CD8-positive, alpha-beta T cell (primary cell): ENCODE measurements at regions of chr14 and their contacts with region 1.

Region 1: GRCh38 chr14:30621940-30622830 is at the start of gene SCFD1:
- DNase-seq: peak; percentile 79 to 96 (median 92)
- ATAC-seq: peak; percentile 98
- H3K4me3 ChIP-seq: peak within 1 kb of the TSS; percentile 80 to 87
- H3K4me3 Mint-ChIP-seq: peak within 1 kb of the TSS; percentile 94
- H3K27ac ChIP-seq: peak within 1 kb of the TSS; percentile 85 to 88
- H3K27ac Mint-ChIP-seq: peak within 1 kb of the TSS; percentile 96
- H3K4me1 ChIP-seq: peaks cover 30% of the 10 kb centered on the region
- H3K4me1 Mint-ChIP-seq: peaks cover 51% of the 10 kb centered on the region
- H3K27me3 ChIP-seq: no peaks in the 10 kb centered on the region
- H3K27me3 Mint-ChIP-seq: no peaks in the 10 kb centered on the region
- CTCF ChIP-seq: no peak
- total RNA-seq, gene SCFD1: 66.5 to 71.5 TPM

Region 2: DNA sequence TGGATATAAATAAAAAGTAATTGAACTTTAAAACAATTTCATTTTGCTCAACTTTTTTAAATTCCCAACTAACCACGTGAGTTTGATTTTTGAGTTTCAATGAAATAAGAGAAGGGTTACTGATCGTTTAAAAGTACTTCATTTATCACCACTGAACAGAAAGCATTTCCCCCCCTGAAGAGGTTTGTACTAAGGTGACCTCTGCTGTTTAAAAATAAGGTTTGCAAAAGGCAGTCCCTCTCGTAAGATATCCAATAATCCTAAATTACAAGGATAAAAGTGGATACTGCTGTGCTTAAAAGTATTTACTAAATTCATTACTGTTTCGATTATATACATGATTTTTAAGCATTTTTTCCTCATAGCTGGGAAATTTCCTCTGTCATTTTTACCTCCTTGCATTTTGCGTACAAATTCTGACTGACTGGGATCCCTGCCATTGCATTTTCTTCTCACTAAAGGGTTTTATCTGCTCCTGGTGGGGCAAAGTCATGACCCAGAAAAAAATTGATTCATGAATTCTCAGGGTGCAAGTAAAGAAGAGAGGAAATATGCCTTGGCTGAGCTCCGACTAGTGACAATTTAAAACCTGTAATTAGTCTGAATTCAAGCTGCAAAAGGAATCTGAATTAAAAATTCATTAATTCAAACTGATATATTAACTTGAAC is 1158.3 kb before region 1 on chr14:
- CTCF ChIA-PET with region 1: no interaction called
- POLR2A ChIA-PET with region 1: no interaction called
- intact Hi-C with region 1: no loop called
- DNase-seq: no peak
- ATAC-seq: no peak
- H3K4me3 ChIP-seq: no peak overlapping the region
- H3K4me3 Mint-ChIP-seq: no peak overlapping the region
- H3K27ac ChIP-seq: no peak overlapping the region
- H3K27ac Mint-ChIP-seq: no peak overlapping the region
- H3K4me1 ChIP-seq: no peaks in the 10 kb centered on the region
- H3K4me1 Mint-ChIP-seq: no peaks in the 10 kb centered on the region
- H3K27me3 ChIP-seq: no peaks in the 10 kb centered on the region
- H3K27me3 Mint-ChIP-seq: no peaks in the 10 kb centered on the region
- CTCF ChIP-seq: no peak

Region 3: GRCh38 chr14:30558675-30559555 is 63.3 kb before region 1 on chr14 and contains the start of gene G2E3:
- CTCF ChIA-PET with region 1: no interaction called
- POLR2A ChIA-PET with region 1: interaction called, 5 read pairs
- intact Hi-C with region 1: loop called (anchors 1 kb)
- DNase-seq: peak; percentile 73 to 92 (median 84)
- ATAC-seq: peak; percentile 99
- H3K4me3 ChIP-seq: peak within 1 kb of the TSS; percentile 91 to 96
- H3K4me3 Mint-ChIP-seq: peak within 1 kb of the TSS; percentile 99
- H3K27ac ChIP-seq: peak within 1 kb of the TSS; percentile 83 to 86
- H3K27ac Mint-ChIP-seq: peak within 1 kb of the TSS; percentile 98
- H3K4me1 ChIP-seq: peaks cover 24% of the 10 kb centered on the region
- H3K4me1 Mint-ChIP-seq: peaks cover 37% of the 10 kb centered on the region
- H3K27me3 ChIP-seq: no peaks in the 10 kb centered on the region
- H3K27me3 Mint-ChIP-seq: no peaks in the 10 kb centered on the region
- CTCF ChIP-seq: no peak
- total RNA-seq, gene G2E3: 25.2 to 34.7 TPM

Region 4: DNA sequence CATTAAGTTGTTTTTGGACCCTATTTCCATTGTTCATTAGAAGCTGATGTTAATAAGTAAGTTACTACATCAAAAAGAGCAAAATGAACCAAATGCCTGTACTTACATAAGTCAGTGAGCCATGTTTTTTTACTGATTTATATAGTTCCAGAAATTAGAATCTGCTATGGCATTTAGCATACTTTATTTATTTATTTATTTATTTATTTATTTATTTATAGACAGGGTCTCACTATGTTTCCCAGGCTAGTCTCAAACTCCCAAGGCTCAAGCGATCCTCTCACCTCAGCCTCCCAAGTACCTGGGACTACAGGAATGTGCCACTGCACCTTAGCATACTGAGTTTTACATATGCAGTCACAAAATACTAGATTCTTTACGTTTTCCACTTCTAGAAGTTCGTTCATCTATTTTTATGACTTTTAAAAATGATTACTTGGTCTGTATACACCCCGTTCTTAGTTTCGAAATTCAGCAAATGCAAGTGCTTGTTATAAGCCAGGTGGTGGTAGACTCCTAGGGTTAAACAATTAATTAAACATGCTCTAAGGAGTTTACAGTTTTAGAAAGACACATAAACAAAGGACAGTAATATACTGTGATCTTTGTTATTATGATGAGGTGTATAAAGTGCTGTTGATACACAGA is 69.7 kb after region 1 on chr14:
- CTCF ChIA-PET with region 1: no interaction called
- POLR2A ChIA-PET with region 1: no interaction called
- intact Hi-C with region 1: loop called in 1 of 2 experiments (anchors 5 kb)
- DNase-seq: no peak
- ATAC-seq: no peak
- H3K4me3 ChIP-seq: no peak overlapping the region
- H3K4me3 Mint-ChIP-seq: no peak overlapping the region
- H3K27ac ChIP-seq: peak overlapping the region in 1 of 2 experiments; percentile 79
- H3K27ac Mint-ChIP-seq: peak overlapping the region; percentile 88
- H3K4me1 ChIP-seq: peaks cover 8% of the 10 kb centered on the region
- H3K4me1 Mint-ChIP-seq: peaks cover 11% of the 10 kb centered on the region
- H3K27me3 ChIP-seq: no peaks in the 10 kb centered on the region
- H3K27me3 Mint-ChIP-seq: no peaks in the 10 kb centered on the region
- CTCF ChIP-seq: no peak

Region 5: GRCh38 chr14:31456841-31457664 is 834.9 kb after region 1 on chr14 and contains the start of gene DTD2:
- CTCF ChIA-PET with region 1: no interaction called
- POLR2A ChIA-PET with region 1: no interaction called
- intact Hi-C with region 1: loop called (anchors 5 kb)
- DNase-seq: peak; percentile 87 to 95 (median 92)
- ATAC-seq: peak; percentile 98
- H3K4me3 ChIP-seq: peak within 1 kb of the TSS; percentile 93 to 95
- H3K4me3 Mint-ChIP-seq: peak within 1 kb of the TSS; percentile 96
- H3K27ac ChIP-seq: peak within 1 kb of the TSS; percentile 78 to 85
- H3K27ac Mint-ChIP-seq: peak within 1 kb of the TSS; percentile 92
- H3K4me1 ChIP-seq: peaks cover 15% of the 10 kb centered on the region
- H3K4me1 Mint-ChIP-seq: peaks cover 42% of the 10 kb centered on the region
- H3K27me3 ChIP-seq: no peaks in the 10 kb centered on the region
- H3K27me3 Mint-ChIP-seq: peaks cover 2% of the 10 kb centered on the region
- CTCF ChIP-seq: no peak
- total RNA-seq, gene DTD2: 4.9 to 6.5 TPM

Region 6: DNA sequence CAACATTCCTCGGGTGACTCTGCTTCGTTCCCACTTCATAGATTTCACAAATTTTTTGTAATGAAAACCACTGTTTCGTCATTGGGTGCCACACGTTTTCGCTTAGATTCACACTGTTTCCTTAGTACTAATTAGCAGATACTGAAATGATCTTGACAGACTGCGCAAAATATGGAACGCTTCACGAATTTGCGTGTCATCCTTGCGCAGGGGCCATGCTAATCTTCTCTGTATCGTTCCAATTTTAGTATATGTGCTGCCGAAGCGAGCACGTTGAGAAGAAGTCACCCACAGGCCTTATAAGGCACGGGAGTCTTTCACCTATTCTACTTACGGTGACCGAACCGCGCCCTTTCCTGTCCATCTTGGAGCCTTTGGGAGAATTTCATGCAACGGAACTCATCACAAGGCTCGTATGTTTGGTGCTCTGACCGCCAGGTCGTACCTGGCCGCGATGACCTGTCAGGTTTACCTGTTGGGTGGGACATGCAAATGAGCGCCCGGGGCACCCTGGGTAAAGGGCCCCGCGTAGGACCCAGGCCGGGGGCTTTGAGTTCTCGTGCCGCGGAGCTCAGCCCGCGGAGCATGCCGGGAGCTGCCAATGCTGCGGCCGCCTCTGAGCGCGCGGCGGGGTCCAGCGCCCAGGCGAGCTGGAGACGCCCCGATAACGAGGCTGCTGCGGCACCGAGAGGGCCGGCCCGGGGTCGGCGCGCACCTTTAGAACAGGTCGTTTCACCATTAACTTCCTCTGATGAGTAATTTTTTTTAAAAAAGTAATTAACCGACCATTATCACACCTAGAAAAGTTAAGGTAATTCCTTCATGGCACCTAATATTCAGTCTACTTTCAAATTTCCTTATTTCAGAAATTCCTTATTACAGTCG is 1581.1 kb after region 1 on chr14 and contains the start of gene RNU6-8:
- CTCF ChIA-PET with region 1: no interaction called
- POLR2A ChIA-PET with region 1: no interaction called
- intact Hi-C with region 1: loop called in 1 of 2 experiments (anchors 5 kb)
- DNase-seq: peak; percentile 66 to 92 (median 85)
- ATAC-seq: peak; percentile 80
- H3K4me3 ChIP-seq: peak within 1 kb of the TSS; percentile 87 to 92
- H3K4me3 Mint-ChIP-seq: peak within 1 kb of the TSS; percentile 90
- H3K27ac ChIP-seq: peak within 1 kb of the TSS; percentile 99 to 100
- H3K27ac Mint-ChIP-seq: peak within 1 kb of the TSS; percentile 100
- H3K4me1 ChIP-seq: peaks cover 20% of the 10 kb centered on the region
- H3K4me1 Mint-ChIP-seq: peaks cover 29% of the 10 kb centered on the region
- H3K27me3 ChIP-seq: no peaks in the 10 kb centered on the region
- H3K27me3 Mint-ChIP-seq: peaks cover 2% of the 10 kb centered on the region
- CTCF ChIP-seq: no peak
- total RNA-seq, gene RNU6-8: not detected